ENCODE measurements at regions of chr17 and their contacts with region 1.

Region 1: GRCh38 chr17:77140166-77140878 is 447 bp upstream of the SEC14L1 start:
- DNase-seq: peak; percentile 99
- H3K4me3 ChIP-seq: peak overlapping the region; percentile 60 to 90
- H3K27ac ChIP-seq: peak overlapping the region; percentile 94 to 97
- H3K4me1 ChIP-seq: no peaks in the 10 kb centered on the region
- H3K27me3 ChIP-seq: no peaks in the 10 kb centered on the region
- CTCF ChIP-seq: peak in 3 of 4 experiments; percentile 2 to 30 (median 17)
- POLR2A ChIP-seq: peak; percentile 98

Region 2: DNA sequence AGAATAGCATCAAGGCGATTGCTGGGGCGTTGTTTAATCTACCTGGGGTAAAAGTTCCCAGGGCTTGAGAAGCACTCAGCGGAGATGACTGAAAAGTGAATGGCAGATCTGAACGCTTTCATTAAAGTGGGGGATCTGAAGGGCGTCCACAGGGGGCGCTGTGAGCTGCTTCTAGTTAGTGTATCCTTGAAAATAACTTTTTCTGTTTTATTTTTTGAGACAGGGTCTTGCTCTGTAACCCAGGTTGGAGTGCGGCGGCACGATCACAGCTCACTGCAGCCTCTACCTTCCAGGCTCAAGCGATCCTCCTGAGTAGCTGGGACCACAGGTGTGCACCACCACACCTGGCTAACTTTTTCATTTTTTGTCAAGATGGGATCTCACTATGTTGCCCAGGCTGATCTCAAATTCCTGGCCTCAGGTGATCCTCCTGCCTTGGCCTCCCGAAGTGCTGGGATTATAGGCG is 360.8 kb after region 1 on chr17:
- intact Hi-C with region 1: loop called (anchors 10 kb)
- DNase-seq: peak; percentile 12 to 15
- H3K4me3 ChIP-seq: no peak overlapping the region
- H3K27ac ChIP-seq: no peak overlapping the region
- H3K4me1 ChIP-seq: no peaks in the 10 kb centered on the region
- H3K27me3 ChIP-seq: no peaks in the 10 kb centered on the region
- CTCF ChIP-seq: no peak
- POLR2A ChIP-seq: no peak

Measured in uterus (tissue), 4 donors.